ENCODE measurements at regions of chr11 and their contacts with region 1.

Region 1: GRCh38 chr11:121655537-121656327 is 203.0 kb upstream of the SORL1-AS1 start:
- DNase-seq: peak; percentile 95
- H3K4me3 ChIP-seq: peak overlapping the region; percentile 55
- CTCF ChIP-seq: peak; percentile 98

Region 2: DNA sequence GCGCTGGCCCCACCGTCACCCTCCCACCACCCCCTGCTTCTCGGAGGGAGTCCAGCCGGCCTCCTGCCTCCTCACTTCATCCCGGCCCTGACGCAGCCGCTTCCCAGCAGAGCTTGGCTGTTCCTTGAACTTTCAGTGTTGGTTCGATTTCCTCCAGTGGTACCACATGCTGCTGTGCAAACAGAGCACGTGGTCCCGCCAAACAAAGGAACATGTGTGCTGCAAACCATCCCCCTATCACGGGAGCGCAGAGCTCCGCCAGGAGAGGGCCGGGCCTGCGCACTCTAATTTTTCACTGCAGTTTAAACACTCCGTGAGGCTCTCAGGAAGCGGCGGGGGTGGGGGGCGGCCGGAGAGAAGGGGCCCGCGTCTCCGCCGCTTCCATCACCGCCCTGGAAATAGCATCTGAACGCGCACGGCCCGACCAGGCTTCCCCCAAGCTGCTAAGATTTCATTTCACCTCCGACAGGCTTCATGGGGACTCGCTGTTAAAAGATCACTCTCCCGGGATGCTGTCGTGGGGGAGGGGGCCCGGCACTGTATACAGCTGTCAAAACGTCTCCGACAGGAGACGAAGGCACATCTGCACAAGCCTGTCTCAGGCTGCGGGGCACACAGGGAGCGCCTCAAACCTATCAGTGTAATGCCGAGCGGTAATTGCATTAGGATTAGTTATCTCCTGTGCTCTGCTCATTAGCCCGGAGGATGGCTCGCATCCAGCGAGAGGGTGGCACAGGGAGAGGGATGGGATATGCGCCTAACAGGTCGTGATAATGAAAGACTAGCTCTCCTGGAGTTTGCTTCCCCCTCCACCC is 66.9 kb after region 1 on chr11:
- CTCF ChIA-PET with region 1: no interaction called
- POLR2A ChIA-PET with region 1: no interaction called
- DNase-seq: no peak
- H3K4me3 ChIP-seq: peak overlapping the region; percentile 55
- CTCF ChIP-seq: no peak

Region 3: DNA sequence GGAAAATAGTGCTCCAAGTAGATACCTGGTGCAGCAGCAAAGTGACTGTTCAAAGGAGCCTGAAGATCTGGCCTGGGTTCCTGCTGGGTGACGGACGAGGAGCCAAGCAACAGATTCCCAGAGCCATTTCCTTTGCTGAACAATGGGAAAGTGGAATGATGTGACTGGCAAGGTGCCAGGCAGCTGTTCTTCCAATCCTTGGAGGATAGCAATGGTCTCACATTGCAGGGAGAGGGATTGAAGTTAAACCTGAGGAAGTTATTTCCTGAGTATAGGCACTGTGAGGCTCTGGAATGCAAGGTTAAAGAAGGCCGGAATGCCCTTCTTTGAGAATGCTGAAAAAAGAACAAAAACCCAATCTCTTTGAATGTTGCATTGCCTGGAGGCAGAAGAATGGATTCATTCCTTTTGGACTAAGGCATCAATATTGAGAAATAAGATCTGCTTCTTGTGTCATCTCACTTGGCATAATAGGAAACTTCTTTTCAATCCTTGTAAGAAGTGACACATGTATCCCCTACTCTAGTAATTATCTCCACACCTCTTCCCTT is 236.5 kb after region 1 on chr11:
- CTCF ChIA-PET with region 1: interaction called, 13 read pairs
- POLR2A ChIA-PET with region 1: no interaction called
- DNase-seq: no peak
- H3K4me3 ChIP-seq: no peak overlapping the region
- CTCF ChIP-seq: no peak

Region 4: GRCh38 chr11:121909596-121909995 is 253.9 kb after region 1 on chr11:
- CTCF ChIA-PET with region 1: no interaction called
- POLR2A ChIA-PET with region 1: no interaction called
- DNase-seq: no peak
- H3K4me3 ChIP-seq: peak overlapping the region; percentile 20; the same call in 1 of the 2 replicates
- CTCF ChIP-seq: no peak

Region 5: GRCh38 chr11:122028545-122028944 is 372.8 kb after region 1 on chr11:
- CTCF ChIA-PET with region 1: interaction called, 16 read pairs
- POLR2A ChIA-PET with region 1: no interaction called
- DNase-seq: no peak
- H3K4me3 ChIP-seq: no peak overlapping the region
- CTCF ChIP-seq: no peak

Region 6: DNA sequence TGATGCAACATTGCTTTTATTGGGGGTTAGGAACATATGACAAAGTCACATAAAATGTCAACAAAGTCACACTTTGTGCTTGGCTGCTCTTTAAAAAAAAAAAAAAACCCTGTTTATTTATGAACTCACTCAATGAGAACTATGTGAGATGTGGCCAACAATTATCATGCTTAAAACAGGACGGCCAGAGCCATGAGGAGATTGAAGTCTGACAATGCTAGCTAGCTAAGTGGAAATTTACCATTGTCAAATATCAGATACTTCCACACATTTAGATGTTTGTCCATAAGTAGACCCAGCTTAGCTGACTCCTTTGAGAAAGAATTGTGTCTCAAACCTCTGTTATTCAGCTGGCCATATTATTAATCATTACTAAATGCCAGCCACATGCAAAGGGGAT is 433.4 kb after region 1 on chr11:
- CTCF ChIA-PET with region 1: interaction called, 35 read pairs
- POLR2A ChIA-PET with region 1: interaction called, 5 read pairs
- DNase-seq: no peak
- H3K4me3 ChIP-seq: no peak overlapping the region
- CTCF ChIP-seq: no peak

Region 7: DNA sequence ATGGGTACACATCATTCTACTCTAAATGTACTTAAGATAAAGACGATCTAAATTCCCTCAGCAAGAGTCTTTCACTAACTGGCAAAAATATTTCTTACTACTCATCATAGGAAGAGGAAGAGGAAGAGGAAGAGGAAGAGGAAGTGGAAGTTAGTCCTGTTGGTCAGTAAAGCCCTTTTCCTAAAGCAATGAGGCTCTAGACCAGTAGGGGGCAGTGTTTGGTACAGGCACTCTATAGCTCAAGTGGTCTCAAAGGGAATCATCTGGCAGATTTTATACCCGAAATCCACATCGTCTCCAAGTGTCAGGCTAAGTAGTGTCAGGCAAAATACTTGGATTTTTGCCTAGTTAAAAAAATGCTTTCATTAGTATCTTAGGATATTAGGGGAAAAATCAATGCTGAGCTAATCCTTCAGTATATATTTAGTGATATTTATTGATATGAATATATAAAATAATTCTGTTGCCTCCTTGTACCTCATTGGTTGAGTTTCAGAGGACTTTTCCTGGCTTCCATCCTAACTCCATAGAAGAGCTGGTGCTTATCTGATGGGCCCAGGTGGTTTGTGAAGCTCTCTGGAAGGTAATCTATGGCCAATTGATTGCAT is 452.6 kb after region 1 on chr11:
- CTCF ChIA-PET with region 1: interaction called, 56 read pairs
- POLR2A ChIA-PET with region 1: interaction called, 3 read pairs
- DNase-seq: no peak
- H3K4me3 ChIP-seq: no peak overlapping the region
- CTCF ChIP-seq: peak; percentile 46

Region 8: GRCh38 chr11:122505304-122506006 is 849.7 kb after region 1 on chr11:
- CTCF ChIA-PET with region 1: interaction called, 44 read pairs
- POLR2A ChIA-PET with region 1: no interaction called
- DNase-seq: peak; percentile 91
- H3K4me3 ChIP-seq: no peak overlapping the region
- CTCF ChIP-seq: peak; percentile 86